A673 (cell line): ENCODE measurements at regions of chr5 and their contacts with region 1.

Region 1: GRCh38 chr5:52356311-52356918 is 431.3 kb upstream of the ITGA1 start:
- DNase-seq: peak; percentile 73
- H3K4me3 ChIP-seq: no peak overlapping the region
- H3K27ac ChIP-seq: peak overlapping the region; percentile 43
- H3K4me1 ChIP-seq: peaks cover 17% of the 10 kb centered on the region
- H3K27me3 ChIP-seq: no peaks in the 10 kb centered on the region
- CTCF ChIP-seq: peak; percentile 85

Region 2: DNA sequence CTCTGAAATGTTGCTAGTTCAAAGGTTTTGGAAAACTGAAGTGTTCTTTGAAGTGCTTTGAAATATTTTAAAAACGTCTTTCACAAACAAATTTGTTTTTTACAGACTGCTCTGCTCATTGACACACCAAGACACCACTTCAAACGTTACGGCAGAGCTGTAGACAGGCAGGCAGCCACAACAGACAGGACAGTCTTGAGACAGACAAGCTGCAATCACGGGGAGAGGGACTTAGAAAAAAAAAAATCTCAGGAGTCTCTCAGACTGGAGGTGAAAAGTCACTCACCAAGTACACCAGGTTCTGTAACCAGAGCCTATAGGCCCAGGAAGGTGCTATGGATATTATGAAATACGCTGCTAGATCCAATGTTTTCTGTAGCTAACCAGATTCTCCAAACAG is 837.8 kb before region 1 on chr5:
- CTCF ChIA-PET with region 1: no interaction called
- POLR2A ChIA-PET with region 1: no interaction called
- intact Hi-C with region 1: no loop called
- DNase-seq: no peak
- H3K4me3 ChIP-seq: no peak overlapping the region
- H3K27ac ChIP-seq: no peak overlapping the region
- H3K4me1 ChIP-seq: no peaks in the 10 kb centered on the region
- H3K27me3 ChIP-seq: no peaks in the 10 kb centered on the region
- CTCF ChIP-seq: no peak

Region 3: GRCh38 chr5:52007230-52007858 is 349.1 kb before region 1 on chr5:
- CTCF ChIA-PET with region 1: interaction called, 3 read pairs
- POLR2A ChIA-PET with region 1: no interaction called
- intact Hi-C with region 1: loop called (anchors 2 kb)
- DNase-seq: peak; percentile 72
- H3K4me3 ChIP-seq: no peak overlapping the region
- H3K27ac ChIP-seq: no peak overlapping the region
- H3K4me1 ChIP-seq: no peaks in the 10 kb centered on the region
- H3K27me3 ChIP-seq: no peaks in the 10 kb centered on the region
- CTCF ChIP-seq: peak; percentile 84

Region 4: DNA sequence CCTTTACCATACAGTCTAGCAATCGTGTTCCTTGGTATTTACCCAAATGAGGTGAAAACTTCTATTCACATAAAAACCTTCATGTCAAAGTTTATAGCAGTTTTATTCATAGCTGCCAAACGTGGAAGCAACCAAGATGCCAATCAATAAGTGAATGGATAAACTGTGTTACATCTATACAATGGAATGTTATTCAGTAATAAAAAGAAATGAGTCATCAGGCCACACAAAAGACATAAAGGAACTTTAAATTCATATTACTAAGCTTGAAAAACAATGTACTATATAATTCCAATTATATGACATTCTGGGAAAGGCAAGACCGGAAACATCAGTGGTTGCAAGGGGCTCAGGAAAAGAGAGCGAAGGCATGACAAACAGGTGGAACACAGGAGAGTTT is 293.2 kb before region 1 on chr5:
- CTCF ChIA-PET with region 1: no interaction called
- POLR2A ChIA-PET with region 1: no interaction called
- intact Hi-C with region 1: no loop called
- DNase-seq: peak; percentile 4
- H3K4me3 ChIP-seq: no peak overlapping the region
- H3K27ac ChIP-seq: no peak overlapping the region
- H3K4me1 ChIP-seq: no peaks in the 10 kb centered on the region
- H3K27me3 ChIP-seq: no peaks in the 10 kb centered on the region
- CTCF ChIP-seq: no peak

Region 5: GRCh38 chr5:52134013-52134650 is 222.3 kb before region 1 on chr5:
- CTCF ChIA-PET with region 1: no interaction called
- POLR2A ChIA-PET with region 1: no interaction called
- intact Hi-C with region 1: loop called (anchors 10 kb)
- DNase-seq: peak; percentile 94
- H3K4me3 ChIP-seq: peak overlapping the region; percentile 9
- H3K27ac ChIP-seq: peak overlapping the region; percentile 84
- H3K4me1 ChIP-seq: peaks cover 54% of the 10 kb centered on the region
- H3K27me3 ChIP-seq: no peaks in the 10 kb centered on the region
- CTCF ChIP-seq: no peak

Region 6: DNA sequence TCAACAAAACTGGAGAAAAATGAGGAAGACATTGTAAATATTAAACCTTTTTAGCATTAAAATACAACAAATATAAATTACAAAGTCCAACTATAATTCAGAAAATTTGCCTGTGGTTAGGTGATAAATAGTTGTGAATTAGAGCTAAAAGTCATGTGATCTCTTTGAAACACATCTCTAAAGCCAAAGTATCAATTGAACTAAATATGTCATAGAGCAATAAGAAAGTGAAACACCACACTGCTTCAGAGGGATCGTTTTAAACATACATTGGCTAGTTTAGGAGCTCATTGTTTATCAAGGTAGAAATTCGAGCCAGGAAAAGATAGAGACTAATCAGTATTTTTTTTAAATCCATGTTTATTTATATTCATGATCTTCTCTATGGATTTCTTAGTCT is 175.0 kb before region 1 on chr5:
- CTCF ChIA-PET with region 1: no interaction called
- POLR2A ChIA-PET with region 1: no interaction called
- intact Hi-C with region 1: no loop called
- DNase-seq: no peak
- H3K4me3 ChIP-seq: no peak overlapping the region
- H3K27ac ChIP-seq: no peak overlapping the region
- H3K4me1 ChIP-seq: peaks cover 3% of the 10 kb centered on the region
- H3K27me3 ChIP-seq: no peaks in the 10 kb centered on the region
- CTCF ChIP-seq: no peak

Region 7: DNA sequence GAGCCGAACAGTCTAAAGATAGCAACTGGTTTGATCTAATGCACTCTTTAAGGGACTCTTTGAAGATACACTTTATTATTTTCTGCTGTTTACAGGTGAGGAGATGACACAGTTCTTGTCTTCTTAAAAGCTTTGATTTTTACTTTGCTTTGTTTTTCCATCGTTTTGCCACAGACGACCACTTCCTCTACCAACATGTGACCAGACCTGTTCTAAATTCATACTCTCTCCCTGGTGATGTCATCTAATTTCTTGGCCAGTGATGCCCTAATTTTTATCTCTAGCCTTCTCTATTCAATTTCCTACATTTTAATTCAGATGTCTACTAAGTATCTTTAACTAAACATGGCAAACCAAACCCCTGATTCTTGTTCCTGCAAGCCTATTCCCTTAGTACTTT is 152.1 kb before region 1 on chr5:
- CTCF ChIA-PET with region 1: no interaction called
- POLR2A ChIA-PET with region 1: no interaction called
- intact Hi-C with region 1: no loop called
- DNase-seq: no peak
- H3K4me3 ChIP-seq: no peak overlapping the region
- H3K27ac ChIP-seq: no peak overlapping the region
- H3K4me1 ChIP-seq: no peaks in the 10 kb centered on the region
- H3K27me3 ChIP-seq: no peaks in the 10 kb centered on the region
- CTCF ChIP-seq: no peak

Region 8: DNA sequence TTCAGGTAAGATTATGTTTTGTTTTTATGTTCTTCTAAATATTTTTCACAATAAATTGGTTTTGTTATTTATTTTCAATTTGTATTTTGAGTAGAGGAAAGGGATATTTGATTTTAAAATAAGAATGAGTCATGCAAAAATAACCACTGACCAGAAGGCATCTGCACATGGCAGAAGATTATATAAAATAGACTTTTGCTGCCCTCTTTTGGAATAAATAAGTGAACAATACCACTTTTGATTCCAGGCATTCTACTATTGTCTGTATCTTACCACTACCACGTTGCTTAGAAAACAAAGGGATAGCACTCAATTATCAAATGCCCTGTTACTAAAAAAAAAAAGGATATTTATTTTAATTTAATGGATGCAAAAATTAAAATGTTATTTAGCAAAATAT is 204.0 kb after region 1 on chr5:
- CTCF ChIA-PET with region 1: no interaction called
- POLR2A ChIA-PET with region 1: no interaction called
- intact Hi-C with region 1: loop called (anchors 2 kb)
- DNase-seq: peak; percentile 80
- H3K4me3 ChIP-seq: no peak overlapping the region
- H3K27ac ChIP-seq: no peak overlapping the region
- H3K4me1 ChIP-seq: peaks cover 26% of the 10 kb centered on the region
- H3K27me3 ChIP-seq: no peaks in the 10 kb centered on the region
- CTCF ChIP-seq: peak; percentile 50